Right cardiac atrium (tissue), 5 donors: ENCODE measurements at regions of chr11 and their contacts with region 1.

Region 1: DNA sequence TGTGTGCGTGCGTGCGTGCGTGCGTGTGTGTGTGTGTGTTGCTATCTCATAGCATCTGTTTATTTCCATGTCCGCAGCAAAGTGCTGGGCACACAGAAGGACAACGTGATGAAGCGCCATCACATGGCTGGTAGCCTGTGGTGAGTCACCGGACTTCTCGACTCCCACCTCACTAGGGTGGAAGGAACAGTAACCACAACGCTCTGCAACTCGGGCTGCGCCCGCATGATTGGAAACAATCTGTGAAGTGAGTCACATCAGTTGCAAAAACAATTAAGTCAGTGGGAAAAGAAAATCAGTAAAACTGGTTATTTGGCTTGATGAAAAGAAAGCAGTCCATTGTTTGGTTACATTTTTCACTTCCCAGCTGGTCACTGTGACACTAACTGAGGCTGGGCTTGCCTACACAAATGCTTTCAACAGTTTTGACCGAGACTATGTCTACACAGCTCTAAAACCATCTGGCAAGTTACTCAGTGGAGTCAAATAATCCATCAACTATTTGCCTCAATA is 437.3 kb upstream of the CADM1 start:
- DNase-seq: peak; percentile 77 to 85 (median 81)
- ATAC-seq: peak; percentile 83 to 92
- H3K4me3 ChIP-seq: no peak overlapping the region
- H3K27ac ChIP-seq: no peak overlapping the region
- H3K4me1 ChIP-seq: no peaks in the 10 kb centered on the region
- H3K27me3 ChIP-seq: no peaks in the 10 kb centered on the region

Region 2: DNA sequence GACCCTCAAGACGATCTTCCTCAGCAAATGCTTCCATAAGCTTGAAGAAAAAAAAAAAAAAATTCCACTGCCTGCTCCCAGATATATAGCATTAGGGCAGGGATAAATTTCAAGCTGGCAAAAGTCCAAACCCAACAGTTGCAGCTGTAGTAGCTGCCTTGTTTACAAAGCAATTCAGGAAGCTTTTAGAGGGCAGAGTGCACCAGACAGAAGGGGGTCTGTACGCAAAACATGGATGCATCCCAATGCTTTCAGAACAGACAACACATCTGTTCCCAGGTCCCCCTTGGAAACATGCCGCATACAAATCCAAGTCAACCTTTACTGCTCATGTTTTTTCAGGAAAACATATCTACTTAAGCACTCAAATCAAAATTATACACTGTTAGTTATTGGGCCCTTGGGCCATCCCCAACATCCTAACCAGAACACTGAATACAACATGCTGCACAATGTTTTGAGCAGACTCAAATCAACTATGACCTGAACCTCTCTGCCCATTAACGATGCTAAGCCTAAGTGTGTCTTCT is 531.8 kb before region 1 on chr11:
- intact Hi-C with region 1: no loop called
- DNase-seq: no peak
- ATAC-seq: no peak
- H3K4me3 ChIP-seq: no peak overlapping the region
- H3K27ac ChIP-seq: no peak overlapping the region
- H3K4me1 ChIP-seq: no peaks in the 10 kb centered on the region
- H3K27me3 ChIP-seq: no peaks in the 10 kb centered on the region

Region 3: DNA sequence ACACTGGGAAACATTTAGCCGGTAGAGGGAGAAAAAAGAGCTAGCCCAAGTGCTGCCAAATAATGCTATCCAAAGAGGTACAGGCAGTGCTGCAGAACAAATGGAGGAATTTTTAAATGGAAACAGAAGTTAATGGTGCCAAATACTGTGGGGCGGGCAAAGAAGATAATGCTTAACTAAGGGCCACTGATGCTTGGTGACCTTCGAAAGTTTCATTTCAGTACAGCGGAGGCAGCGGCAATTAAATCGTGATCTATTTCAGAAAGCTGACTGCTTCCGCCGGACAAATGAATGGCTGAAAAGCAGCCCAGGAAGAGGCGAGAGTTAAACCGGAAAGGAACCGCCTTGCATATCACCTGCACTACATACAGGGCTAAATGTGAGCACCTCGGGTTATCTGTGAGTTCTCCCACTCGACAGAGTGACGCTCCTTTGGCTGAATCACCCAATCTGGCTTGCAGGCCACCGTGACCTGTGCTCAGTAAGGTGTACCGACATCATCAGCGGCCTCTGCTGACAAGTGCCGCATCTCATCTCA is 479.5 kb before region 1 on chr11:
- intact Hi-C with region 1: no loop called
- DNase-seq: peak in 2 of 3 donors; percentile 19 to 37
- ATAC-seq: peak; percentile 59 to 69
- H3K4me3 ChIP-seq: peak overlapping the region; percentile 33
- H3K27ac ChIP-seq: peak overlapping the region; percentile 3
- H3K4me1 ChIP-seq: no peaks in the 10 kb centered on the region
- H3K27me3 ChIP-seq: no peaks in the 10 kb centered on the region

Region 4: DNA sequence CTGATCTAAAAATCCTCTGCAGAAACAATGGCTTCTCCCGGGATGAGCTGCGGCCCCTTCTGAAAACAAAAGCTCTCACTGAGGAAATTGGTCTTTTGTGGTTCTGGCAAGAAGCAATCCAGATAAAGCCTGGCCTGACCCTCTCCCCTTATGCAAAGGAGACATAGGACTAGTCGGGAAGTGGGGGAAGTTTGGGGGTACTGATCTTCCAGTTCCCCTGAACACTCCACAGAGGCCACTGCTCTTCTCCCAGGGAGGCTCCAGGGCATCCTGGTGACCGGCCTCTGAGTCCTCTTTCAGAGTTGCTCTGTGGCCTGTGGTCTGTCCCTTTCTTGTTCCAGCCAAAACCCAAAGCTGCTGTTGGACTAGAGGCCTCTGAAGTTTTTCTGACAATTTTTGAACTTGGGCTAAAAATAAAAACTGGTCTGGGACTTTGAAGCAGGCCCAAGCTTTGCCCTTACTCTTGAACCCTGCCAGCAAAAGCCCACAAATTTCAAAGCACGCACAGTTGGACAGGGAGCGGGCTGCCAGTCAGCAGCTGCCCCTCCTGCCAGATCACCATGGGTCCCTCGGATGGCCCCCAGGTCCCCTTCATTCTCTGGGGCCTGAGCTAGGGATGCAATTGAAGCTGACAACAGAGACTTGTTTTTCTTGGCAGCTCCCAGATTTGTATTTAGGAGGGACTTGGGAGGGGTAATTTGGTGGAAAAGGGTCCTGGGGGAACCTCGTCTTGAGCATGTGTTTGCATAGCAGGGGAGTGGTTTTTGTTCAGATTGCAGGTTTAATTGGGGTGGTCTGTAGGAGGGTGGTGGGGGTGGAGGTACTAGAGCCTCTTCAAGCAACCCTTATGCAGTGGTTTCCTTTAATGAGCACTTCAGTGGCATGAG is 55.8 kb before region 1 on chr11:
- intact Hi-C with region 1: loop called in 1 of 4 experiments (anchors 10 kb)
- DNase-seq: no peak
- ATAC-seq: peak; percentile 20 to 38
- H3K4me3 ChIP-seq: no peak overlapping the region
- H3K27ac ChIP-seq: no peak overlapping the region
- H3K4me1 ChIP-seq: no peaks in the 10 kb centered on the region
- H3K27me3 ChIP-seq: no peaks in the 10 kb centered on the region

Region 5: DNA sequence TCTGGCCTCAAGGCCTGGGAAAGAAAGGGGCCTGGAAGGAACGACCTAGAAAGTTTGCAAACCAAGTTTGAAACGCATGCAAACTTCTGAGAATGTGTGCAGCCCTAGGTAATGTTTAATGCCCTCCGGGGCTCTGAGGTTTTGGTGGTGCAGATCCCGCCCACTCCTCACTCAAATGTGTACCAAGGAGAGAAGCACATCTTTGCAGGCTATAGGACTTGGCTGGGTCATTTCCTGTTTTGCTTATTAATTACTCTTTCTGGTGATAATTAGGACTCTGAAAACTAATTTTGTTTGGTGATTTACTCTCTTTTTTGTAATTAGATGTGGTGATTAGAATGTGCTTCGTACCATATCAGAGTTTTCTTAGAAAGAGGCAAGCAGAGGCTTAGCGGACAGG is 188.6 kb after region 1 on chr11:
- intact Hi-C with region 1: no loop called
- DNase-seq: no peak
- ATAC-seq: no peak
- H3K4me3 ChIP-seq: no peak overlapping the region
- H3K27ac ChIP-seq: no peak overlapping the region
- H3K4me1 ChIP-seq: no peaks in the 10 kb centered on the region
- H3K27me3 ChIP-seq: no peaks in the 10 kb centered on the region

Region 6: DNA sequence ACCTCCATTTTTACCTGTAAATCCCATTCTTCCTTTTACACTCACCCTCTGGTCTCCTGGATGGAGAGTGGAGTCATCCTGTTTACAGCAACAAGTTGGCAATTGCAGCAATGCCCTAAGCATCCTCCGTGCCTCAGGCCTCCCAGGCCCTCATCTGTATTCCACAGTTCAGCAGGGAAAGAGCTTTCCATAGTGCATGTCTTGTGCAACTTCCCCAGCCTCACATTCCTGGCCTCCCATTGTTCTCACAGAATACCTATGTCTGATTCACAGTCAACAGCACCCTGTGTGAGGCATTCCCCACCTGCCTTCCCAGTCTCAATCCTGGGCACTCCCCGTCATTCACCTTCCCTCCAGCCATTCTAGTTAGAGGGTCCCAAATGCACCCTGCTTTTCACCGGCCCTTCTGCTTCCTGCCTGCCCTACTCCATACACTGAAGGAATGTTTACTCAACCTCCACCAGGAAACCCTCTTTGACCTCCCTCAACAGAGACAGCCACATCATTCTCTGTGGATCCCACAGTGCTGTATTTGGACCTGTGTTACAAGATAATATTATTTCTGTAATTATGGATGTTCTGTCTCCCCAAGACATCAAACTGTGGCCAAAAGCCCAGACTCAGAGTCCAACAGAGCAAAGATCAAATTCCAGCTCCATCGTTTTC is 425.6 kb after region 1 on chr11:
- intact Hi-C with region 1: no loop called
- DNase-seq: no peak
- ATAC-seq: no peak
- H3K4me3 ChIP-seq: no peak overlapping the region
- H3K27ac ChIP-seq: no peak overlapping the region
- H3K4me1 ChIP-seq: no peaks in the 10 kb centered on the region
- H3K27me3 ChIP-seq: no peaks in the 10 kb centered on the region